PC-9 (cell line): ENCODE measurements at regions of chr19 and their contacts with region 1.

Region 1: GRCh38 chr19:33005420-33005819 is 33.4 kb downstream of the FAAP24 start:
- DNase-seq: peak; percentile 38 to 89
- H3K4me3 ChIP-seq: no peak overlapping the region
- H3K27ac ChIP-seq: 0 out of 2 replicates have a peak overlapping the region, but pooled peaks have one; percentile 16
- H3K4me1 ChIP-seq: peaks cover 21% of the 10 kb centered on the region
- H3K27me3 ChIP-seq: no peaks in the 10 kb centered on the region
- CTCF ChIP-seq: no peak

Region 2: GRCh38 chr19:32971715-32972540 is 33.5 kb before region 1 on chr19 and contains the starts of genes CEP89 and FAAP24:
- CTCF ChIA-PET with region 1: no interaction called
- POLR2A ChIA-PET with region 1: no interaction called
- intact Hi-C with region 1: no loop called
- DNase-seq: peak; percentile 99
- H3K4me3 ChIP-seq: peak within 1 kb of the TSS; percentile 86
- H3K27ac ChIP-seq: peak within 1 kb of the TSS; percentile 46
- H3K4me1 ChIP-seq: no peaks in the 10 kb centered on the region; the same call in 1 of the 2 replicates
- H3K27me3 ChIP-seq: no peaks in the 10 kb centered on the region
- CTCF ChIP-seq: no peak
- total RNA-seq, gene CEP89: 29.3 and 33.6 TPM in 2 replicates
- total RNA-seq, gene FAAP24: 6.9 and 10.1 TPM in 2 replicates

Region 3: GRCh38 chr19:33047406-33047805 is 42.0 kb after region 1 on chr19:
- CTCF ChIA-PET with region 1: no interaction called
- POLR2A ChIA-PET with region 1: no interaction called
- intact Hi-C with region 1: loop called (anchors 5 kb)
- DNase-seq: peak; percentile 96 to 99
- H3K4me3 ChIP-seq: peak overlapping the region; percentile 17; the same call in 1 of the 2 replicates
- H3K27ac ChIP-seq: peak overlapping the region; percentile 98
- H3K4me1 ChIP-seq: peaks cover 85% of the 10 kb centered on the region
- H3K27me3 ChIP-seq: no peaks in the 10 kb centered on the region
- CTCF ChIP-seq: no peak

Region 4: DNA sequence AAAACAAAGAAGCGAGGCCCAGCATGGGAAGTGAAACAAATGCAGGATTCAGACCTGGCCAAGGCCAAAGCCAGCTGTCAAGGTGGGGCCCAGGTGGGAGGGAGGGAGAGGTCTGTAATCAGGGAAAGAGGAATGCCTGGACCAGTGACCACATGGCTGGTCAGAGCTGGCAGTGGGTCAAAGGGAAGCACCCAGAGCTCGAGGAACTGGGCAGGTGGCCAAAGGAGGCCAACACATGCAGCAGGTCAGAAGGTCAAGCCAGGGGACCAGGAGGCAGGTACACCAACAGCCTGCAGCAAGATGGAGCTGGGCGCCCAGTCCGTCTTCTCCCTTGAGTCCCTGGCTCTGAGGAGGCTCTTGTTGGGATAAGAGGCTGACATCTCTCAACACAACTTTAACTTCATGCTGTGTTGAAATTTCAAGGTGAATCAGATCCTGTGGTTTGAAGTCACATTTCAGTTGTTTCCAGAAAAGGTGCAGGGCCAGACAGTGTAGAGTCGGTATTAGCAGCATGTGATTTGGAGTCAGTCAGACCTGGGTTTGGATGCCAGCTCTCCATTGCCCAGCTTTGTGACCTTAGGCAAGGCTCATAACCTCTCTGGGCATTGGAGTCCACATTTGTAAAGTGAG is 92.7 kb after region 1 on chr19:
- CTCF ChIA-PET with region 1: no interaction called
- POLR2A ChIA-PET with region 1: no interaction called
- intact Hi-C with region 1: loop called (anchors 5 kb)
- DNase-seq: peak; percentile 83 to 90
- H3K4me3 ChIP-seq: no peak overlapping the region
- H3K27ac ChIP-seq: peak overlapping the region; percentile 54
- H3K4me1 ChIP-seq: peaks cover 65% of the 10 kb centered on the region
- H3K27me3 ChIP-seq: no peaks in the 10 kb centered on the region
- CTCF ChIP-seq: no peak

Region 5: DNA sequence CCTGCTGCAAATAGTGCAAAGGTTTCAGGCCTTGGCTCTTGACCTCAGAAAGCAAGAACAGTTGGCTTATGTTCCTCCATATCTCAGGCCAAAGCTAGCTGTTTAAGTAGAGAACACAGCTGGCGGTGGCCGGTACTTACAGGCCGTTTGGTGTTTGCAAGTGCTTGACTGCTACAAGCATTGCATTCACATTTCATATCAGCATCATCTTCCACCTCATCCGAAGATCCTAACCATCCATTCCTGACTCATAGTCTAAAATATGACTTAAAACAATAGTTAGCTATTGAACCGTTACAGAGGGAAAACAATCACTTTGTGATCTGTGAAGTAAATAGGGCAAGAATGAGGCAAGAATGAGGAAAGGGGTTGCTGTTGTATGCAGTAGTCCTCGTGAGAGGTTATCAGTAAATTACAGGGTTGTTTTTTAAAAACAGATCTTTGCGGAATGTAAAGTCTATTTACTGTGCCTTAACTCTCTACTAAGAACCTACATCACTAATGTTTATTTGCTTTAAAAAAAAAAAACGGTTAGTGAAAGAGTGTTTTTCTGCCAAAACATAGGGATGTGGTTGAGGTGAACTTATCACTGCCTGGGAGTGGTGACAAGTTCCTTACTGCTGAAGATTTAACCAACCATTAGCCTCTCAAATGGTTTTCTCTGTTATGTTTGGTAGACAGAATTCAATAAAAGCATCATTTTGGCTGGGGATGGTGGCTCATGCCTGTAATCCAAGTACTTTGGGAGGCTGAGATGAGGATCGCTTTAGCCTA is 104.9 kb after region 1 on chr19:
- CTCF ChIA-PET with region 1: interaction called, 10 read pairs
- POLR2A ChIA-PET with region 1: no interaction called
- intact Hi-C with region 1: no loop called
- DNase-seq: peak; percentile 31 to 74
- H3K4me3 ChIP-seq: no peak overlapping the region
- H3K27ac ChIP-seq: 0 out of 2 replicates have a peak overlapping the region, but pooled peaks have one; percentile 4
- H3K4me1 ChIP-seq: 0 out of 2 replicates have a peak, but pooled peaks cover 11% of the 10 kb centered on the region
- H3K27me3 ChIP-seq: no peaks in the 10 kb centered on the region
- CTCF ChIP-seq: no peak

Region 6: DNA sequence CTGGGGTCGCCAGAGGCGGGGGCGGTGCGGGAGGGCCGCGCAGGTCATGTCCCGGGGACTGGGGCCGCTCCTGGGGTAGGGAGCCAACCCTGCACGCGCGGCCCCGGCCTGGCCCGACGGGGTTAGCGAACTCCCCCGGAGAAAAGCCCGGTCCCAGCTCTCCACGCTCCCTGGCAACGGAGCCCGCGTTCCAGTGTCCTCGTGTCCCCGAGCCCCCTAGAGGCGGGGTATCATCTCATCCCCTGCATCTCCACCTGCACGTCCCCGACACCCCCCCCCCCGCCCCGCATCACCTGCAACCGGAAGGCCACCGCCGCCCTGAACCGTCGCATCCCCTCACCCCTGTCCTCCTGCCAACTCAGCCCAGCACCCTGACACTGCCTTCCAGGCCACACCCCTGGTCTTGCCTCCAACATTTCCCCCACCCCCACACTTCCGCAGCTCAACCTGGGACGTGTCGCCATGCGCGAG is 129.2 kb after region 1 on chr19:
- CTCF ChIA-PET with region 1: interaction called, 10 read pairs
- POLR2A ChIA-PET with region 1: no interaction called
- intact Hi-C with region 1: no loop called
- DNase-seq: no peak
- H3K4me3 ChIP-seq: no peak overlapping the region
- H3K27ac ChIP-seq: no peak overlapping the region
- H3K4me1 ChIP-seq: no peaks in the 10 kb centered on the region
- H3K27me3 ChIP-seq: no peaks in the 10 kb centered on the region
- CTCF ChIP-seq: no peak